Activated CD4-positive, alpha-beta memory T cell treated with anti-CD3 and anti-CD28 coated beads for 36 hours (primary cell): ENCODE measurements at regions of chr6 and their contacts with region 1.

Region 1: DNA sequence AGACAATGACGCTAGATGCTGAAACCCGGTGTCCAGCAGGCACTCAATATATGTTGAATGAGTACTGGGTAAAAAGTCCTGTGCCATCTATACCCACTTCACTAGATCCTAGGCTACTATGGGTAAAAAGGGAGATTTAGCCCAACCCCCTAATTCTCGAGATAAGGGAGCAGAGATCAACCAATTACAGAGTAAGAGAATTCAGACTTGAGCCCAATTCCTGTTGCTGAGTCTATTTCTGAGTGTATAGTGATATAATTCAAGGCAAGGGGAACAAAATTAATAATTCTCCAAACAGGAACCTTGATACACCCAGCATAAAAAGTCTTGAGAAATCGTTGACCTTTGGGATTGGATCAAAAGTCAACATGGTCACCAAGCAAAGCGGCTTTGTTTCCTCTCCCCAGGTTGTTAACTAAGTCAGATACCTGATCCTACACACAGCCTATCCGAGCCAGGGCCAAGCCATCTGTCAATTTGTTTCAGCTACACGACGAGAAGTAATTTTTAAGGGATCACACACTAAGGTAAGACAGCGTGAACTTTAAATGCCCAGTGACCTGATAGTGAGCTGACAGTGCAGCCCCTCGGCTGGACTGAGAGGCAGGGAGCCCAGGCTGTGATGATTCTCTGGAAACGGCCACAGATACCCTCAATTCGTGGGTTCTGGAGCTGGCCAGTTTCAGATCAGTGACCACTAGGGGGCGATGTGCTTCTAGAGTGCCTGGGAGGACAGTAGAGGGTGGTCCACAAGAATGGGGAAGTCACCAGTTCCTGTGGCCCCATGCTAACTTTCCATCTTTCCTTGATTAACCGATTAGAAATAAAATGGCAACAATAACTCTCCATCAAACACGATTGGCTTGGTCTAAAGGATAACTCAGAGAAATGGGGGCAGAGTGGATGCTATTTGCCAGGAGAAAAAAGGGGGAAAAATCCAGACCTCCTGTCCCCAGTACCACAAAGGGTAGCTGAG is 46.2 kb downstream of the SLC22A23 start:
- DNase-seq: peak; percentile 67
- H3K4me3 Mint-ChIP-seq: no peak overlapping the region
- H3K27ac Mint-ChIP-seq: no peak overlapping the region
- H3K4me1 Mint-ChIP-seq: peaks cover 5% of the 10 kb centered on the region
- H3K27me3 Mint-ChIP-seq: no peaks in the 10 kb centered on the region

Region 2: DNA sequence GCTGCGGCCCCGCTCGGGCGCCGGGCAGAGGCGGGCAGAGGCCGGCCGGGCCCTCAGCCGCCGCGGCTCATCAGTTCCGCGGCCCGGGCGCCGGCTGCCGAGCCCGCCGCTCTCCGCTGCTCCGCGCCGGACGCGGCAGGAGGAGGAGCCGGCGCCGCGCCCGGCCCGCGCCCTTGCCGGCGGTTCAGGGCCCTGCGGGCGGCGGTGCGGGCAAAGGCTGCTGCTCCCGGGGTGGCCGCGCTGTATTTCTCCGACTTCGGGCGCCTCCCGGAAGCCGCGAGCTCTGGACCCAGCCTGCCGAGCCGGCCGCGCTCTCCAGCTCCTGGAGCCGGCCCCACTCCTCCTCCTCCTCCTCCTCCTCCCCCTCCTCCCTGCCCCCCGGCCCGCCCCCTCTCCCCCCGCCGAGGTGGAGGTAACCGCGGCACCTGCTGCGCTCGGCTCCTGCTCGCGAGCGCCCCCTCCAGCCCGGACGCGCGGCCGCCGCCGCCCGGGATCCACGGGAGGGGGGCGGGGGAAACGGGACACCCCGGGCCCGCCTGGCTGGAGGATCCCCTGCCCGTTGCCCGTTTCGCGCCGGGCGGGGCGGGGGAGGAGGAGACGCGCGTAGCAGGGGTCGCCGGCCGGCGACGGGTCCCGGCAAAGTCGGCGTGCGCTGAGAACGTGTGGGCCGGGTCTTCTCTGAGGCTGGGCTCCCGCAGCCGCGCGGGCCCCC is 46.2 kb after region 1 on chr6 and contains the start of gene SLC22A23:
- CTCF ChIA-PET with region 1: interaction called, 5 read pairs
- POLR2A ChIA-PET with region 1: no interaction called
- intact Hi-C with region 1: loop called (anchors 5 kb)
- DNase-seq: peak; percentile 79
- H3K4me3 Mint-ChIP-seq: peak within 1 kb of the TSS; percentile 71
- H3K27ac Mint-ChIP-seq: no peak within 1 kb of the TSS
- H3K4me1 Mint-ChIP-seq: peaks cover 7% of the 10 kb centered on the region
- H3K27me3 Mint-ChIP-seq: peaks cover 7% of the 10 kb centered on the region
- total RNA-seq, gene SLC22A23: 0.90 to 1.0 TPM

Region 3: GRCh38 chr6:3518356-3519225 is 107.9 kb after region 1 on chr6:
- CTCF ChIA-PET with region 1: no interaction called
- POLR2A ChIA-PET with region 1: no interaction called
- intact Hi-C with region 1: loop called (anchors 10 kb)
- DNase-seq: no peak
- H3K4me3 Mint-ChIP-seq: no peak overlapping the region
- H3K27ac Mint-ChIP-seq: no peak overlapping the region
- H3K4me1 Mint-ChIP-seq: no peaks in the 10 kb centered on the region
- H3K27me3 Mint-ChIP-seq: peaks cover 14% of the 10 kb centered on the region

Region 4: GRCh38 chr6:4973982-4974745 is 1563.5 kb after region 1 on chr6:
- CTCF ChIA-PET with region 1: no interaction called
- POLR2A ChIA-PET with region 1: no interaction called
- intact Hi-C with region 1: no loop called
- DNase-seq: no peak
- H3K4me3 Mint-ChIP-seq: no peak overlapping the region
- H3K27ac Mint-ChIP-seq: no peak overlapping the region
- H3K4me1 Mint-ChIP-seq: no peaks in the 10 kb centered on the region
- H3K27me3 Mint-ChIP-seq: peaks cover 5% of the 10 kb centered on the region